Heart left ventricle (tissue), 16 donors: ENCODE measurements at regions of chr2 and their contacts with region 1.

Region 1: DNA sequence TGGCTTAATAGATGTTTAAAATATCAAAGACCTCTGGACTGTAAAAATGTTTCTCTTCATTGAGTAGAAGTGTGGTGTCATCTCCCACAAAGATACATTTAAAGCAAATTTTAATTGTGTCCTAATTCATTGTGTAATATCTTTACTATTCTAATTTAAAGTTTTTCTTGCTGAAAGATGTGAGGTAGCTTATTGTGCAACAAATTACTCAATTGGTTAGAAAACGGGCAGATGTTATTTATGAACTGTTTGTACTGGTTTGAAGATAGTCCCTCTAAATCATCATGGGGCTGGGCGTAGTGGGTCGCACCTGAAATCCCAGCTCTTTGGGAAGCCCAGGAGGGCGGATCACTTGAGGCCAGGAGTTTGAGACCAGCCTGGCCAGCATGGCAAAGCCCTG is 65.3 kb downstream of the CYBRD1 start:
- DNase-seq: no peak
- ATAC-seq: no peak
- H3K4me3 ChIP-seq: no peak overlapping the region
- H3K27ac ChIP-seq: no peak overlapping the region
- H3K4me1 ChIP-seq: no peaks in the 10 kb centered on the region
- H3K27me3 ChIP-seq: peaks cover 0 to 17% (median 0%) of the 10 kb centered on the region in 9 donors
- CTCF ChIP-seq: no peak
- POLR2A ChIP-seq: no peak

Region 2: GRCh38 chr2:171180229-171180930 is 407.2 kb before region 1 on chr2:
- intact Hi-C with region 1: no loop called
- DNase-seq: no peak
- ATAC-seq: no peak
- H3K4me3 ChIP-seq: no peak overlapping the region
- H3K27ac ChIP-seq: no peak overlapping the region
- H3K4me1 ChIP-seq: peaks cover 0 to 9% (median 0%) of the 10 kb centered on the region in 12 donors
- H3K27me3 ChIP-seq: no peaks in the 10 kb centered on the region
- CTCF ChIP-seq: no peak
- POLR2A ChIP-seq: no peak

Region 3: DNA sequence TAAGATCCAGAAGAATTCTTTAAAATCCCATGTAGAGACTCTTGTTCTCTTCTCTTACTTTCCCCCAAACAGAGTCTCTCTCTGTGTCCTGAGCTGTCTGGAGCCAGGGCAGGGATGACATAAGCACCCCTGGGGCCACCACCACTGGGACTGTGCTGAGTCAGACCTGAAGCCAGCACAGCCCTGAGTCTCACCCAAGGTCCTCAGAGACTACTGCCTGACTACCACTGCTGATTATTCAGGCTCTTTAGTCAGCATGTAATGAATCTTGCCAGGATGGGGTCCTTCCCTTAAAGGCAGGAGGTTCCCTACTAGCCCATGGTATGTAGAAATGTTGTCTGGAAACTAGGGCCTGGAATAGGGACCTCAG is 64.8 kb after region 1 on chr2:
- intact Hi-C with region 1: no loop called
- DNase-seq: no peak
- ATAC-seq: no peak
- H3K4me3 ChIP-seq: no peak overlapping the region
- H3K27ac ChIP-seq: no peak overlapping the region
- H3K4me1 ChIP-seq: no peaks in the 10 kb centered on the region
- H3K27me3 ChIP-seq: peaks cover 0 to 13% (median 0%) of the 10 kb centered on the region in 9 donors
- CTCF ChIP-seq: no peak
- POLR2A ChIP-seq: no peak

Region 4: GRCh38 chr2:171670655-171671054 is 83.1 kb after region 1 on chr2:
- intact Hi-C with region 1: loop called in 1 of 10 experiments (anchors 10 kb)
- DNase-seq: no peak
- ATAC-seq: no peak
- H3K4me3 ChIP-seq: no peak overlapping the region
- H3K27ac ChIP-seq: no peak overlapping the region
- H3K4me1 ChIP-seq: no peaks in the 10 kb centered on the region
- H3K27me3 ChIP-seq: peaks cover 0 to 13% (median 0%) of the 10 kb centered on the region in 9 donors
- CTCF ChIP-seq: no peak
- POLR2A ChIP-seq: no peak